ENCODE measurements at regions of chr12 and their contacts with region 1.

Region 1: GRCh38 chr12:48865434-48866290 is at the start of gene RND1:
- DNase-seq: peak; percentile 92 to 93
- H3K4me3 ChIP-seq: peak within 1 kb of the TSS; percentile 73
- H3K4me3 Mint-ChIP-seq: peak within 1 kb of the TSS; percentile 89
- H3K27ac Mint-ChIP-seq: peak within 1 kb of the TSS; percentile 80
- H3K4me1 ChIP-seq: peaks cover 22% of the 10 kb centered on the region
- H3K4me1 Mint-ChIP-seq: peaks cover 14% of the 10 kb centered on the region
- H3K27me3 ChIP-seq: no peaks in the 10 kb centered on the region
- H3K27me3 Mint-ChIP-seq: no peaks in the 10 kb centered on the region
- CTCF ChIP-seq: peak in 1 of 2 experiments; percentile 13
- total RNA-seq, gene RND1: 5.1 and 5.2 TPM in 2 replicates

Region 2: GRCh38 chr12:48882315-48882687 is 16.6 kb after region 1 on chr12:
- CTCF ChIA-PET with region 1: interaction called, 14 read pairs
- POLR2A ChIA-PET with region 1: interaction called, 49 read pairs
- intact Hi-C with region 1: loop called (anchors 1 kb)
- DNase-seq: peak; percentile 48 to 60
- H3K4me3 ChIP-seq: no peak overlapping the region
- H3K4me3 Mint-ChIP-seq: peak overlapping the region; percentile 70
- H3K27ac Mint-ChIP-seq: peak overlapping the region; percentile 96
- H3K4me1 ChIP-seq: peaks cover 70% of the 10 kb centered on the region
- H3K4me1 Mint-ChIP-seq: peaks cover 68% of the 10 kb centered on the region
- H3K27me3 ChIP-seq: no peaks in the 10 kb centered on the region
- H3K27me3 Mint-ChIP-seq: no peaks in the 10 kb centered on the region
- CTCF ChIP-seq: no peak

Region 3: DNA sequence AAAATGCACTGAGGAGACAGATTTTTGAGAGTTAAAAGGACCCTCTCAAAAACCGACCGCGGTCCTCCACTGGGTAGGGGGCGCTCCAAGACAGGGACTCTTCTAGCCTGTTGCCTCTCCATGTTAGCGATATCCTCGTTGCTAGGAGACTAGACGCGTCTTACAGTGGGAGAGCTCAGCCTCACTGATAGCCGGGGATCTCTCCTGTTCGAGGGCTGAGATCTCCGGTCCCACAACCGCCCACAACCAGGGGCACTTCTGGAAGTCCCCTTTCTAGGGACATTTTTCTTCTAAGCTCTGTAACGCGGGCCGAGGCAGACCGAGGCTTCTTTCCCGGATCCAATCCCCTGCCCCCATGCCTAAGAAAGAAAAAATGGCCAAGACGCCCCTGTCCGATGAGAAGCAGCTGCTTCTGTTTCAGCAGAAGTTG is 38.3 kb after region 1 on chr12:
- CTCF ChIA-PET with region 1: no interaction called
- POLR2A ChIA-PET with region 1: no interaction called
- intact Hi-C with region 1: no loop called
- DNase-seq: no peak
- H3K4me3 ChIP-seq: no peak overlapping the region
- H3K4me3 Mint-ChIP-seq: no peak overlapping the region
- H3K27ac Mint-ChIP-seq: no peak overlapping the region
- H3K4me1 ChIP-seq: peaks cover 20% of the 10 kb centered on the region
- H3K4me1 Mint-ChIP-seq: peaks cover 7% of the 10 kb centered on the region
- H3K27me3 ChIP-seq: no peaks in the 10 kb centered on the region
- H3K27me3 Mint-ChIP-seq: no peaks in the 10 kb centered on the region
- CTCF ChIP-seq: no peak

Region 4: DNA sequence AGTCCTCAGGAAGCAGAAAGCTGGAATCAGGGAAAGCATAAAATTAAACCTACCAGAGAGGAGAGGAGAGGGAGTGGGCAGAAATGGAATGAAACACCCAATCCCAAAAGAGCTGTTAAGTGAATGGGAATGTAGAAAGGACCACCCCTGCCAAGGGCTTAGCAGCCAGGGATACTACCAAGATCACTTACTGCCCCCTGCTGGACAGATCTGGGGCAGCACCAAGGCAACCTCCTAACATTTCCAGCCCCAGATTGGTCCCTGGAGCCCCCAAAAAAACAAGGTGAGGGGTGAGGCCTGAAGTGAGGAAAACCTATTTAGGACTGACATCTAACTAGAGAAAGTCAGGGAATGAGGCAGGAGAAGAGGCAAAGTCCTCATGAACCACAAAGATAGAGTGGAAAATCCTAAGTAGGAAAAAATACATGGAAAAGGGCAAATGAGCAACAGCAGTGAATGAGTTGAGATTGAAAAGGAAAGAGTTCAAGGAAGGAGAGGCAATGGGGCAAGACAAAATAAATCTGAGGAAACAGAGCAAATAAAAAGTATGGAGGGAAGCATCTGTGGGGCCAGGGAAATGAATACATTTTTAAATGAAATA is 70.8 kb after region 1 on chr12:
- CTCF ChIA-PET with region 1: interaction called, 15 read pairs
- POLR2A ChIA-PET with region 1: no interaction called
- intact Hi-C with region 1: no loop called
- DNase-seq: peak; percentile 75 to 88
- H3K4me3 ChIP-seq: no peak overlapping the region
- H3K4me3 Mint-ChIP-seq: no peak overlapping the region
- H3K27ac Mint-ChIP-seq: no peak overlapping the region
- H3K4me1 ChIP-seq: no peaks in the 10 kb centered on the region
- H3K4me1 Mint-ChIP-seq: no peaks in the 10 kb centered on the region
- H3K27me3 ChIP-seq: no peaks in the 10 kb centered on the region
- H3K27me3 Mint-ChIP-seq: no peaks in the 10 kb centered on the region
- CTCF ChIP-seq: peak; percentile 94 to 98